Gastrocnemius medialis (tissue), 4 donors: ENCODE measurements at regions of chr7 and their contacts with region 1.

Region 1: GRCh38 chr7:55593515-55594318 is 21.4 kb upstream of the VOPP1 start:
- DNase-seq: no peak
- ATAC-seq: peak; percentile 69 to 86
- H3K4me3 ChIP-seq: no peak overlapping the region
- H3K27ac ChIP-seq: no peak overlapping the region
- H3K4me1 ChIP-seq: peaks cover 10 to 12% of the 10 kb centered on the region in 2 donors
- H3K27me3 ChIP-seq: no peaks in the 10 kb centered on the region
- CTCF ChIP-seq: peak; percentile 32 to 74 (median 59)
- POLR2A ChIP-seq: no peak

Region 2: DNA sequence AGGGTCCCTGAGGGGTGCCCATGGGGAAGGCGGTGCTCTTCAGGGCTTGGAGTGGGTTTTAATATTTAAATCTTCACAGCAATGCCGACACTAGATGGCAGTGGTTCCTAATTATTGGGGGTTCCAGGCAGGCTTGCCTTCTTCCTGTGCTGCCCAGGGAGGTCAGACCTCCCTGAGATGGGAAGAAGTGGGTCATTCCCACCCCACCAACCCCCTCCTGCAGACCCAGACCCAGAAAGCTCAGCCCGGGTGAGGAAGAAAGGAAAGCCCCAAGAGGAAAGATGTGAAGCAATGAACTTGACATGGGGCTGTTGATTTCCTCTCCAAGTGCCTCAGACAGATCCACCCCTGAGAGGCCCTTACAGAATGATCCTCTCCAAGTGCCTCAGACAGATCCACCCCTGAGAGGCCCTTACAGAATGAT is 313.7 kb before region 1 on chr7:
- in situ Hi-C with region 1: loop called in 1 of 4 experiments (anchors 25 kb)
- intact Hi-C with region 1: no loop called
- DNase-seq: peak; percentile 17 to 30
- ATAC-seq: peak; percentile 85 to 86
- H3K4me3 ChIP-seq: no peak overlapping the region
- H3K27ac ChIP-seq: no peak overlapping the region
- H3K4me1 ChIP-seq: no peaks in the 10 kb centered on the region
- H3K27me3 ChIP-seq: no peaks in the 10 kb centered on the region
- CTCF ChIP-seq: peak; percentile 51 to 73 (median 66)
- POLR2A ChIP-seq: no peak

Region 3: DNA sequence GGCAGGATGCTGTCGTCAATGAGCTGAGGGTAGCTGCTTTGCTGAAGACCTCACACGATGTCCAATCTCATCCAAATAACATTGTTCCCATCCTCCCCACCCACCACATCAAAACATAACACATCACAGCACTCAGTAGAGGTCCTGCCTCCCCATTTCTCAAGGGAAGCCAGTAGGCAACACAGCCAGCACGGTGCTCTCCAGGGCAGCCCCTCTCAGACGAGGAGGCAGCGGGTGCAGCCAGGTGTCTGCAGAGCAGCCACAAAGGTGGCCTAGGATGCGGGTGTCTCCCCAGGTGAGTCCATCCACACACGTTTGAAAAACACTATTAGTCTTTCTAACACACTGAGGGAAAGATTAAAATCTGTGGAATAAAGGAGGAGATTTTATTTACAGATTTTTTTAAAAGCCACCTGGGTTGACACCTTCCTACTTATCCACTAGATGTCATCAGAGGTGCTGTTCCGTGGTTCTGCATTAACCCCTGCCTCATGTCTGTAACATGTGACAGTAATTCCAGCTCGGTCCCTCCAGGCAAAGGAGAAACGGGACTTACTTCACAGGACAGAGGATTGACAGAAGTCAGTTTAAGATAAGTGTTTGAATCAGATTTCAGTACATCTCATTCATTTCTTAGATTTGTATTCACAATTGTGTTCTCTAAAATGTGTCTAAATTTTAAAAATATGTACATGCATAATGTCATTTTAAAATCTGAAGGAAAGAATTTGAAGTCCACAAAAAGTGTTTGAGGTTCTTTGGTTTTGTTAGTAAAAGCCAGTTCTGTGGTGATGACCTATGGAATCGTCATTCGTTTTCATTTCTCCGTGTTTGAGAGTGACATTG is 160.6 kb before region 1 on chr7:
- in situ Hi-C with region 1: loop called in 2 of 4 experiments (anchors 5 to 25 kb)
- intact Hi-C with region 1: loop called (anchors 5 kb)
- DNase-seq: no peak
- ATAC-seq: peak; percentile 68 to 89
- H3K4me3 ChIP-seq: no peak overlapping the region
- H3K27ac ChIP-seq: no peak overlapping the region
- H3K4me1 ChIP-seq: peaks cover 0 to 4% of the 10 kb centered on the region in 2 donors
- H3K27me3 ChIP-seq: no peaks in the 10 kb centered on the region
- CTCF ChIP-seq: peak in 4 of 5 experiments; percentile 26 to 44 (median 34)
- POLR2A ChIP-seq: no peak

Region 4: DNA sequence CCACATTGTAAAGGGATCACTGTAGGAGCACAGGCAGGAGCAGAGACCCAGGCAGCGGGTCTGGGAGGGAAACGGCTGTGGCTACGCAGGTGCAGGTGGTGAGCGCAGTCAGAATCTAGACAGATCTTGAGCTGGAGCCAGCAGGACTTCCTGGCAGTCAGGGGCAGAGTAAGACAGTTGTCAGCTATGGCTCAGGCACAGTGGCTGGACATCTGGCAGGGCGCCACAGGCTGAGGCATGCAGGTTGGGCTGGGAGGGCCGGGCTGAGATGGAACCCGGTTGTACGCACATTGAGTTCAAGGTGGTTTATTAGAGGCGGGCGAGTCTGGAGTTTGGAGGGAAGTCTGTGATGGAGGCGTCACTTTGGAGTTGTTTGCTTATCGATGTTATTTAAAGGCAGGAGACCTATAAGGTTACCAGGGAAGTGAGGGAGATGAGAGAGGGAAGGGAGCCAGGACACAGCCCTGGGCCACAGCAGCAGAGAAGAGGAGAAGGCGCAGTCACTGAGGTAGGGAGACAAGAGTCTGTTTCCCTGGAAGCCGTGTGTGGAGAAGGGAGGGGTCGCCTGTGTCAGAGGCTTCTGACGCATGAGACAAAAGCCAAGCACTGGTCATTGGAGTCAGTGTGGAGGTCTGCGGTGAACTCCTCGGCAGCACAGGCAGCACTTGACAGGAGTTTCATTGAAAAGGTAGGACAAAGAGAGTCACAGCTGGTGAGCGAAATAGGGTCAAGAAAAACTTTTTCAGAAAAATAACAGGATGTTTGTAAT is 154.8 kb before region 1 on chr7:
- in situ Hi-C with region 1: loop called in 2 of 4 experiments (anchors 5 to 25 kb)
- intact Hi-C with region 1: loop called (anchors 5 kb)
- DNase-seq: peak; percentile 34 to 71
- ATAC-seq: peak; percentile 51 to 59
- H3K4me3 ChIP-seq: no peak overlapping the region
- H3K27ac ChIP-seq: no peak overlapping the region
- H3K4me1 ChIP-seq: peaks cover 16 to 22% of the 10 kb centered on the region in 2 donors
- H3K27me3 ChIP-seq: no peaks in the 10 kb centered on the region
- CTCF ChIP-seq: no peak
- POLR2A ChIP-seq: no peak

Region 5: GRCh38 chr7:55509322-55509721 is 84.4 kb before region 1 on chr7:
- in situ Hi-C with region 1: loop called in 1 of 4 experiments (anchors 10 kb)
- intact Hi-C with region 1: no loop called
- DNase-seq: peak; percentile 22 to 53
- ATAC-seq: peak; percentile 65 to 81
- H3K4me3 ChIP-seq: no peak overlapping the region
- H3K27ac ChIP-seq: peak overlapping the region; percentile 0 to 51 (median 20)
- H3K4me1 ChIP-seq: peaks cover 35 to 44% of the 10 kb centered on the region in 2 donors
- H3K27me3 ChIP-seq: no peaks in the 10 kb centered on the region
- CTCF ChIP-seq: no peak
- POLR2A ChIP-seq: peak in 1 of 2 donors; percentile 7

Region 6: GRCh38 chr7:55521917-55522902 is 71.5 kb before region 1 on chr7:
- in situ Hi-C with region 1: no loop called
- intact Hi-C with region 1: loop called (anchors 2 kb)
- DNase-seq: peak in 1 of 2 donors; percentile 62
- ATAC-seq: peak; percentile 3 to 51
- H3K4me3 ChIP-seq: no peak overlapping the region
- H3K27ac ChIP-seq: peak overlapping the region; percentile 39 to 65 (median 42)
- H3K4me1 ChIP-seq: peaks cover 58 to 66% of the 10 kb centered on the region in 2 donors
- H3K27me3 ChIP-seq: no peaks in the 10 kb centered on the region
- CTCF ChIP-seq: no peak
- POLR2A ChIP-seq: no peak

Region 7: GRCh38 chr7:55552320-55553023 is 41.2 kb before region 1 on chr7:
- in situ Hi-C with region 1: no loop called
- intact Hi-C with region 1: loop called (anchors 1 kb)
- DNase-seq: peak; percentile 66 to 80
- ATAC-seq: peak; percentile 88
- H3K4me3 ChIP-seq: peak overlapping the region; percentile 37 to 53 (median 45)
- H3K27ac ChIP-seq: peak overlapping the region; percentile 90 to 96 (median 92)
- H3K4me1 ChIP-seq: peaks cover 87 to 89% of the 10 kb centered on the region in 2 donors
- H3K27me3 ChIP-seq: no peaks in the 10 kb centered on the region
- CTCF ChIP-seq: no peak
- POLR2A ChIP-seq: peak; percentile 9 to 21